AG04450 (cell line): ENCODE measurements at regions of chr15 and their contacts with region 1.

Region 1: GRCh38 chr15:92979011-92979701 is 79.0 kb downstream of the CHD2 start:
- DNase-seq: no peak
- H3K4me3 ChIP-seq: no peak overlapping the region
- H3K27ac ChIP-seq: no peak overlapping the region
- H3K27me3 ChIP-seq: no peaks in the 10 kb centered on the region
- CTCF ChIP-seq: no peak

Region 2: GRCh38 chr15:92868992-92869988 is 109.9 kb before region 1 on chr15:
- CTCF ChIA-PET with region 1: no interaction called
- POLR2A ChIA-PET with region 1: no interaction called
- DNase-seq: no peak
- H3K4me3 ChIP-seq: no peak overlapping the region
- H3K27ac ChIP-seq: peak overlapping the region; percentile 31
- H3K27me3 ChIP-seq: no peaks in the 10 kb centered on the region
- CTCF ChIP-seq: no peak

Region 3: DNA sequence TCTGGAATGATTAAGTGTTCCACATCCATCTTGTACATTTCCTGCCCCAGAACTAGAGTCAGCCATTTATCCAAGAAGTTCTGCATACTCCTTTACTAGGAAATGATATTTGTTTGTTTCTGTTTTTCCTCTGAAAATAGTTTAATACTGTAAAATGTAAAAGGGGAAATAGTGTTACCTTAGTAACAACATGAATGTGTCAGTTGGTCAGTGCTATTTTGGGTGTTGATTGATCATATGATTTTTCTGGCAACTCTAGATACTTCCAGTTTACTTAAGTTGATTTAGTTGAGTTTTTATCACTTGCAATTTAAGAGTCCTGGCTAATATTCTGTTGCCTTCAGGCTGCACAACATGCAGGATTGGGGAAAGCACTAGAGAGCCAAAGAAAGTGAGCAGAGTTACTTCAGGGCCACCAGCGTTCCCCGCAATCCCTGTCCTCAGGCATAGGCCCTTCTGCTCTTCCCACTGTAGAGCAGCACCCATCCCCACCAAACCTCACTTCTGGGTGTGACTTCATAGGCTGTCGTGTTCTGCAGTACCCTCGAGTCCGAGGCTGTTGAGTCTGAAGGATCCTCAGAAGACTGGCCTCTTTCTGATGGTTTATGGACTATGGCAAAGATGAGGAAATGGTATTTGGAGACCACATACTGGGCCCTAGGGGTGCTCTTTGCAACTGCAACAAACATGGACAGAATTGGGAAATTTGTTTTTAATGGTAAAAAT is 10.1 kb before region 1 on chr15:
- CTCF ChIA-PET with region 1: interaction called, 10 read pairs
- POLR2A ChIA-PET with region 1: no interaction called
- DNase-seq: no peak
- H3K4me3 ChIP-seq: no peak overlapping the region
- H3K27ac ChIP-seq: no peak overlapping the region
- H3K27me3 ChIP-seq: no peaks in the 10 kb centered on the region
- CTCF ChIP-seq: no peak; the same call in 1 of the 2 replicates